ENCODE measurements at regions of chrX and their contacts with region 1.

Region 1: GRCh38 chrX:103464774-103465117 is 54.5 kb downstream of the RAB40A start:
- DNase-seq: peak in 4 of 5 donors; percentile 80 to 88 (median 84)
- H3K4me3 ChIP-seq: peak overlapping the region; percentile 20 to 48 (median 29)
- H3K27ac ChIP-seq: no peak overlapping the region
- H3K4me1 ChIP-seq: no peaks in the 10 kb centered on the region
- H3K27me3 ChIP-seq: no peaks in the 10 kb centered on the region
- CTCF ChIP-seq: peak; percentile 70

Region 2: GRCh38 chrX:103276539-103277002 is 188.2 kb before region 1 on chrX and contains the start of gene TCEAL5:
- intact Hi-C with region 1: no loop called
- DNase-seq: peak in 4 of 5 donors; percentile 65 to 82 (median 72)
- H3K4me3 ChIP-seq: peak within 1 kb of the TSS in 2 of 3 donors; percentile 5 to 73
- H3K27ac ChIP-seq: no peak within 1 kb of the TSS
- H3K4me1 ChIP-seq: no peaks in the 10 kb centered on the region
- H3K27me3 ChIP-seq: peaks cover 2% of the 10 kb centered on the region
- CTCF ChIP-seq: no peak
- total RNA-seq, gene TCEAL5: 0.28 TPM

Region 3: DNA sequence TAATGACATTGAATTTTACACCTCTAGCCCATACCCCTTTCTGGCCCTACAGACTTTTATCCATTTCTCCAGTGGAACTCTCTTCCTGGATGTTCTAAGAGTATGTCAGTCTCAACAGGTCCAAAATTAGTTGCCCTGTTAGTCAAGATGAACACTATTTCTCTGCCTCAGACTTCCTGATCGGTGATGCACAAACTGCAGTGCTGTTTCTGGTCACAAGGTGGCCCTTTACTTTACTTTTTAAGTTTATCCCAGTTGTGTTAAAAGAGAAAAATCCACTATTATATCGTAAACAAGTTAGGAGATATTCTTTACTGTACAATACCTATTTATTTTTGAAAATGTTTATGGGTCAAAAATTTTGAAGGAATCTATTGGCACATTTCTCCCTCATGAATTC is 121.6 kb before region 1 on chrX:
- intact Hi-C with region 1: loop called (anchors 10 kb)
- DNase-seq: peak in 2 of 5 donors; percentile 59 to 62
- H3K4me3 ChIP-seq: no peak overlapping the region
- H3K27ac ChIP-seq: no peak overlapping the region
- H3K4me1 ChIP-seq: no peaks in the 10 kb centered on the region
- H3K27me3 ChIP-seq: peaks cover 2% of the 10 kb centered on the region
- CTCF ChIP-seq: peak; percentile 68

Region 4: DNA sequence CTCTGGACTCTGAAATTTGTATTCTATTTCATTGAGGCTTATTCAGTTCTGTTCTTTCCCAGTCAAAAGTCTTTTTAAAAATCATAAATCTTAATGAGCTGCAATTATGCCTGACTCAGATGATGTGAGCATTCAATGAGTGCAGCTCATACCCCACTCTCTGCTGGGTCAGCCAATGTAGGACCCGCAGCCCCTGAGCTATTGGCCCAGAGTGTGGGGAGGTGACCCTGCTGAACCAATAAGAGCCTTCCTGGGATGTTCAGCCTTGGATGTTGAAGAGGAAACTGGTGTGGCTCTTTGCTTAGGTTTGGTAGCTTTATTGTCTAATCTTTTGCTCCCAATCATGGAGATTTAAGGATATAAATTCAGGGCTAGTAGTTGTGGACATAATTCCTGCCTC is 108.5 kb after region 1 on chrX:
- intact Hi-C with region 1: no loop called
- DNase-seq: no peak
- H3K4me3 ChIP-seq: no peak overlapping the region
- H3K27ac ChIP-seq: no peak overlapping the region
- H3K4me1 ChIP-seq: no peaks in the 10 kb centered on the region
- H3K27me3 ChIP-seq: no peaks in the 10 kb centered on the region
- CTCF ChIP-seq: no peak

Measured in kidney (tissue), 22 donors.